Sciatic nerve (tissue), 2 donors: ENCODE measurements at regions of chr9 and their contacts with region 1.

Region 1: GRCh38 chr9:1554081-1555035 is 460.8 kb upstream of the SMARCA2 start:
- DNase-seq: no peak
- ATAC-seq: no peak

Region 2: DNA sequence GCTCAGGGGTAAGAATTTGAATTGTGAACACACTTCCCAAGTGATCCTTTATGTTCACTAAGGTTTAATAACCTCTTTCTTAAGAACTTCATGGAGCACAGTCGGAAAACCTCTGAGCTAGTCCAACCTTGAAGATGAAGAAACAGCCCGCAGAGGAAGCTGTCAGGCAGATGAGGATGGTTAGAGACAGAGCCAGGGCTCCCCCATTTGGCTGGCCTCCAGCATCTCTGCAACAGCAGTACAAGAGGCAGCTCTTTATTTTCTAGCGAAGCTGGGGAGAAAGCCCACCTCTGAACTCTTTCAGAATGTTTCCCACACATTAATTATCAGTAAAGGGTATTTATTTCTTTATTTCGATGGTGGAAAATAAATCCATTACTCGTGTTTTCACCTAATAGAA is 153.4 kb before region 1 on chr9:
- intact Hi-C with region 1: no loop called
- DNase-seq: no peak
- ATAC-seq: no peak

Region 3: GRCh38 chr9:1522219-1522767 is 32.1 kb before region 1 on chr9:
- intact Hi-C with region 1: loop called (anchors 1 kb)
- DNase-seq: no peak
- ATAC-seq: peak; percentile 67